ENCODE measurements at regions of chr15 and their contacts with region 1.

Region 1: DNA sequence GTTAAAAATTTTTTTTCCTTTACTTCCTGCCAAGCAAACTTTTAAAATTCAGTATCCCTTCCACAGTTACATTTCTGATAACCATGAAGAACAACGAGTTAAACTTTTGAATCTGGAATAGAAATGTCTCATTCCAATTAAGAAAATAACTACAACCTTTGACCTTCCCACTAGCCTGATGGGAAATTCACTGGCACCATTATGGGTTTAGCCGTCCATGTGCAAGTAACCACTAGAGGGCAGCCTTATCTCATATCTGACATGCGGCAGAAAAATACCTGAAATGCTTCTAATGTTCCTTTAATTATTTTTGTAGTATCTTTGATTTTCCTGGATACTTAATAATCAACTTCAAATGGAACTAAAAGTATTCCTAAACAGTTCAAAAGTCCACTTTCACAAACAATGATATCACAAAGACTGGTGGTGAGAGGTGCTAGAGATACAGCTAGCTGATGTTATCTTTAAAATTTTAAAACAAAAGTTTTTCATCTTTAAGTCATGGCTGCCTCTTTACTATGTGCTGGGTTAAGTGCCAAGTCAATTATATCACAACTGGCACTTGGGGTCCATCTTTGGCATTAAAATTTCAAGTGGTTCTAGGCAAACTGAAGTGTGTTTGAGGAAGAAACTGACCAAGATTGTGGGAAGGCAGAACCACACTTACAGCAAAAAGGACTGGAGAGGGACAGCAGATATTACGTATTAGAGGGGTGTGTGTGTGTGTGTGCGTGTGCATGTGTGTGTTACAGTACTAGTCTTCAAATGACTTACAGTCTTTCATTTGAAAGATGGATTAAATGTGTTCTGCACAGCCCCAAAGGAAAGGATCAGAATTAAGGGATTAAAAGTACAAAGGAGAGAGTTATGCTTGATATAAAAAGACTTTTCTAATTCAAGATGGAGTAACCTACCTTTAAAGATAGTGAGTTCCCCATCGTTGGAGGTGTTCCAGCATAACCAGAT is 107.1 kb upstream of the ICE2 start:
- DNase-seq: peak; percentile 73
- H3K27ac ChIP-seq: no peak overlapping the region
- CTCF ChIP-seq: peak; percentile 96

Region 2: GRCh38 chr15:60478566-60479360 is 107.3 kb before region 1 on chr15 and contains the start of gene ICE2:
- CTCF ChIA-PET with region 1: no interaction called
- POLR2A ChIA-PET with region 1: no interaction called
- DNase-seq: peak; percentile 94
- H3K27ac ChIP-seq: peak within 1 kb of the TSS; percentile 85
- CTCF ChIP-seq: no peak

Region 3: GRCh38 chr15:60548101-60548500 is 37.9 kb before region 1 on chr15:
- CTCF ChIA-PET with region 1: no interaction called
- POLR2A ChIA-PET with region 1: no interaction called
- DNase-seq: no peak
- H3K27ac ChIP-seq: no peak overlapping the region
- CTCF ChIP-seq: no peak

Region 4: DNA sequence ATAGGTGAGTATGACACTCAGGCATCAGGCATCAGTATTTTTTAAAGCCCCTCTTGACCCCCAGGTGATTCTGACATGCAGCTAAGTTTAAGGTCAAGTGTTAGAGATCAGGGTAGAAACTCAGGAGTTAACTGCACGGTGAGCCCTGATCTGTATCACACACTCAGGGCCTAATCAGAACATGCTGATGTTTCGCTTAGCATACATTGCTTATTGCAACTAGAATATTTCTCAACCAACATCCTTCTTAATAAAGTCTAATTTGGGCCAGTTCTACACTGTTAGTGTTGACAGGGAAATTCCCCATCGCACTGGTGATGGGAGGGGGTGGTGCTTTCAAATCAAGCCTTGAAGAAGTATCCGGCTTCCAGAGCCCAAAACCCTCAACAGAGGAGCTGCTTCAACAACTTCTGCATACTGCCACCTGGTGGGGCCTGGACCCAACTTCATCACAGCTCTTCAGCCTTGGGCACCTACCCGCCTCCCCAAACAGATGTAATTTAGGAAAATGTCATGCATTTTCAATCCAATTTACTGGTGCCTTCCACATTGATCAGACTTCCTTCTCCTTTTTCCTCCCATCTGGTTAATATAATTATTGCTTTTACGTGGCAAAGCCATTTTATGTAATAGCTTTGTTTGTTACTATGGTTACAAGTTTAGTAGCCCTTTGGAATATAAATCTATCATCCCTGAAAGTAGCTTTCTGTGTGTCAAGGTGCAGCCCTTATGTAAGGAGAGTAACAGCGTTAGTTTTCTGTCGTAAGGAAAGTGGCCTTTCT is 330.8 kb after region 1 on chr15:
- CTCF ChIA-PET with region 1: interaction called, 24 read pairs
- POLR2A ChIA-PET with region 1: no interaction called
- DNase-seq: peak; percentile 65
- H3K27ac ChIP-seq: no peak overlapping the region
- CTCF ChIP-seq: peak; percentile 87

Region 5: GRCh38 chr15:60932051-60932915 is 346.3 kb after region 1 on chr15:
- CTCF ChIA-PET with region 1: interaction called, 17 read pairs
- POLR2A ChIA-PET with region 1: no interaction called
- DNase-seq: peak; percentile 99
- H3K27ac ChIP-seq: peak overlapping the region; percentile 57
- CTCF ChIP-seq: peak; percentile 85

Measured in RWPE1 (cell line).